Caco-2 (cell line): ENCODE measurements at regions of chr1 and their contacts with region 1.

Region 1: GRCh38 chr1:184813528-184814089 is 59.0 kb upstream of the EDEM3 start:
- DNase-seq: no peak
- H3K4me3 ChIP-seq: no peak overlapping the region
- H3K4me3 Mint-ChIP-seq: no peak overlapping the region
- H3K27ac Mint-ChIP-seq: no peak overlapping the region
- H3K4me1 ChIP-seq: no peaks in the 10 kb centered on the region
- H3K4me1 Mint-ChIP-seq: no peaks in the 10 kb centered on the region
- H3K27me3 ChIP-seq: no peaks in the 10 kb centered on the region
- H3K27me3 Mint-ChIP-seq: no peaks in the 10 kb centered on the region
- CTCF ChIP-seq: no peak

Region 2: DNA sequence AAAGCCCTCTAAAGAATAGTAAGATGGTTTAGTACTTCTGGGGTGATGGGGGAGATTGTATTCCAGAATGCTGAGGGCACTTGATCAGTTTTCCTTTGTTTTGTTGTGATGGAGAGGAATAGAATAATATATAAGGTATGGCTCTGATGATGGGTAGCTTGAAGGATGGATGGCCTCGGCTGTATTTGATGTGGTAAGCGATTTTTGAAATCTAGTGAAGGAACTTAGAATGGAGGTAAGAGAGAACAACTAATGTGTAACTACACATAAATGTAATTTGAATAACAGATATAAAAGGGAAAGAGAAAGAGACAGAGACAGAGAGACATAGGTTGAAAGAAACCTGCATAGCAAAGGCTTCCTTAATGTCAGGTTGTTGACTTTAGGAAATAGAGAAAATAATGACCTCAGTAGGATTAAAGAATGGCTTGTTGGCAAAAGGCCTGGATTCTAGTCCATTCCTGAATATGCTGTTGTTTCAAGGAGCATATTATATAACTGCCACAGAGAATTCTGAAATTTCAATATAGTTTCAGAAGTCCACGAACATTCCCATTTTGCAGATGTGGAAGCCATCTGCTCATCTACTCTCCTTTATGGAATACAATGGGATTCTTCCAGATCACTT is 102.0 kb after region 1 on chr1:
- CTCF ChIA-PET with region 1: no interaction called
- POLR2A ChIA-PET with region 1: no interaction called
- intact Hi-C with region 1: no loop called
- DNase-seq: no peak
- H3K4me3 ChIP-seq: no peak overlapping the region
- H3K4me3 Mint-ChIP-seq: no peak overlapping the region
- H3K27ac Mint-ChIP-seq: no peak overlapping the region
- H3K4me1 ChIP-seq: no peaks in the 10 kb centered on the region
- H3K4me1 Mint-ChIP-seq: no peaks in the 10 kb centered on the region
- H3K27me3 ChIP-seq: no peaks in the 10 kb centered on the region
- H3K27me3 Mint-ChIP-seq: peaks cover 3% of the 10 kb centered on the region
- CTCF ChIP-seq: no peak

Region 3: GRCh38 chr1:185177360-185177759 is 363.8 kb after region 1 on chr1:
- CTCF ChIA-PET with region 1: no interaction called
- POLR2A ChIA-PET with region 1: no interaction called
- intact Hi-C with region 1: loop called (anchors 2 kb)
- DNase-seq: no peak
- H3K4me3 ChIP-seq: no peak overlapping the region
- H3K4me3 Mint-ChIP-seq: no peak overlapping the region
- H3K27ac Mint-ChIP-seq: no peak overlapping the region
- H3K4me1 ChIP-seq: no peaks in the 10 kb centered on the region
- H3K4me1 Mint-ChIP-seq: peaks cover 5% of the 10 kb centered on the region
- H3K27me3 ChIP-seq: no peaks in the 10 kb centered on the region
- H3K27me3 Mint-ChIP-seq: no peaks in the 10 kb centered on the region
- CTCF ChIP-seq: no peak